ENCODE measurements at regions of chr6 and their contacts with region 1.

Region 1: DNA sequence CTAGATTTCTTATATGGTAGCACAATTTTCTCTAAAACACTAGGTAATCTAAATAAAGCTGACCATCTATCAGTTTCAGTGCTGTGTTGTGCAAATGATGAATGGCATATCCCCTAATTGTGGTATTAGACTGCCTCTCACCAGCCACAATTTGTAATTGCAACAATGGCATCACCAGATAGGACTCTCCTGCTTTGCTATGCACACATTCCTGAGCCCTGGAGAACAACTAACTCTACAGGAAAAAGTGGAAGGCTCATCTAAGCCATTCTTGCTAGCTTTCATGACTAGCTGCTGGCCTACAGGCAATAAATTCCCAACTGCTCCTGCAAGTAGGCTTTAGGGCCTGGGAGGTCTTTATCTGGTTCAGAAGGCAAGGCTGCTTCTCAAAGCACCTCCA is 974.1 kb downstream of the EYS start:
- DNase-seq: peak; percentile 9
- ATAC-seq: peak; percentile 77
- H3K4me3 ChIP-seq: no peak overlapping the region
- H3K27ac ChIP-seq: no peak overlapping the region
- H3K4me1 ChIP-seq: no peaks in the 10 kb centered on the region
- H3K27me3 ChIP-seq: no peaks in the 10 kb centered on the region
- CTCF ChIP-seq: peak; percentile 41; the same call in 1 of the 2 replicates
- EP300 ChIP-seq: no peak
- POLR2A ChIP-seq: no peak
- RAD21 ChIP-seq: no peak

Region 2: DNA sequence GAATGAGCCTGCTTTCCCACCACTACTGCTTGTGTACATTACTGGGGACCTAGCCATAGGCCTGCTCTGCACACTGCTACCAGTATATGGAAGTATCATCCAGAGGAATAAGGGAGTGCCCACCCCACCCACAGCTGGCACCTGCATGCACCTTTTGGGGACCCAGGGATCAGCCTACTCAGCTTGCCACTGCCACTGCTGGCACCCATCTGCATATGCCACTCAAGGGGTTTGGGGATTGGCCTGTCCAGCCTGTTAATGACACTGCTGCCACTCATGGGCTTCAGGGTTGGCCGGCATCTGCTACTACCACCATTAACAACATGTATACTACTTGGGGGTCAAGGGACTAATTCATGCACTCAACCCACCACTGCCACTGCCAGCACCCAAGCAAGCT is 265.2 kb before region 1 on chr6:
- CTCF ChIA-PET with region 1: no interaction called
- POLR2A ChIA-PET with region 1: no interaction called
- in situ Hi-C with region 1: no loop called
- intact Hi-C with region 1: loop called (anchors 1 kb)
- DNase-seq: no peak
- ATAC-seq: no peak; the same call in 2 of the 3 replicates
- H3K4me3 ChIP-seq: no peak overlapping the region
- H3K27ac ChIP-seq: no peak overlapping the region
- H3K4me1 ChIP-seq: no peaks in the 10 kb centered on the region
- H3K27me3 ChIP-seq: no peaks in the 10 kb centered on the region
- CTCF ChIP-seq: no peak
- EP300 ChIP-seq: no peak
- POLR2A ChIP-seq: no peak
- RAD21 ChIP-seq: no peak